Activated CD4-positive, alpha-beta T cell treated with anti-CD3 and anti-CD28 coated beads, Interleukin-2, amount 10 ng/mL, durations not matched to agents 24 days and 14 days (primary cell): ENCODE measurements at regions of chr19 and their contacts with region 1.

Region 1: GRCh38 chr19:15125232-15126067 is 18.2 kb downstream of the SYDE1 start:
- DNase-seq: peak; percentile 99
- H3K4me3 Mint-ChIP-seq: peak overlapping the region; percentile 92
- H3K27ac Mint-ChIP-seq: peak overlapping the region; percentile 96
- H3K4me1 Mint-ChIP-seq: peaks cover 32% of the 10 kb centered on the region
- H3K27me3 Mint-ChIP-seq: no peaks in the 10 kb centered on the region

Region 2: GRCh38 chr19:15110081-15110781 is 15.2 kb before region 1 on chr19:
- intact Hi-C with region 1: loop called (anchors 2 kb)
- DNase-seq: no peak
- H3K4me3 Mint-ChIP-seq: no peak overlapping the region
- H3K27ac Mint-ChIP-seq: no peak overlapping the region
- H3K4me1 Mint-ChIP-seq: peaks cover 12% of the 10 kb centered on the region
- H3K27me3 Mint-ChIP-seq: peaks cover 21% of the 10 kb centered on the region

Region 3: GRCh38 chr19:16111160-16111908 is 985.9 kb after region 1 on chr19 and contains the start of gene RAB8A:
- intact Hi-C with region 1: loop called (anchors 1 kb)
- DNase-seq: peak; percentile 100
- H3K4me3 Mint-ChIP-seq: peak within 1 kb of the TSS; percentile 95
- H3K27ac Mint-ChIP-seq: peak within 1 kb of the TSS; percentile 95
- H3K4me1 Mint-ChIP-seq: peaks cover 26% of the 10 kb centered on the region
- H3K27me3 Mint-ChIP-seq: no peaks in the 10 kb centered on the region
- total RNA-seq, gene RAB8A: 227 and 247 TPM in 2 replicates